ENCODE measurements at regions of chr11 and their contacts with region 1.

Region 1: GRCh38 chr11:66510271-66510989 is at the start of gene BBS1:
- DNase-seq: peak; percentile 84
- H3K4me3 ChIP-seq: peak within 1 kb of the TSS; percentile 56 to 91 (median 89)
- H3K27ac ChIP-seq: peak within 1 kb of the TSS; percentile 34
- H3K4me1 ChIP-seq: peaks cover 5% of the 10 kb centered on the region
- H3K27me3 ChIP-seq: no peaks in the 10 kb centered on the region
- CTCF ChIP-seq: no peak
- POLR2A ChIP-seq: peak; percentile 82
- total RNA-seq, gene BBS1: 29.5 and 32.9 TPM in 2 replicates

Region 2: DNA sequence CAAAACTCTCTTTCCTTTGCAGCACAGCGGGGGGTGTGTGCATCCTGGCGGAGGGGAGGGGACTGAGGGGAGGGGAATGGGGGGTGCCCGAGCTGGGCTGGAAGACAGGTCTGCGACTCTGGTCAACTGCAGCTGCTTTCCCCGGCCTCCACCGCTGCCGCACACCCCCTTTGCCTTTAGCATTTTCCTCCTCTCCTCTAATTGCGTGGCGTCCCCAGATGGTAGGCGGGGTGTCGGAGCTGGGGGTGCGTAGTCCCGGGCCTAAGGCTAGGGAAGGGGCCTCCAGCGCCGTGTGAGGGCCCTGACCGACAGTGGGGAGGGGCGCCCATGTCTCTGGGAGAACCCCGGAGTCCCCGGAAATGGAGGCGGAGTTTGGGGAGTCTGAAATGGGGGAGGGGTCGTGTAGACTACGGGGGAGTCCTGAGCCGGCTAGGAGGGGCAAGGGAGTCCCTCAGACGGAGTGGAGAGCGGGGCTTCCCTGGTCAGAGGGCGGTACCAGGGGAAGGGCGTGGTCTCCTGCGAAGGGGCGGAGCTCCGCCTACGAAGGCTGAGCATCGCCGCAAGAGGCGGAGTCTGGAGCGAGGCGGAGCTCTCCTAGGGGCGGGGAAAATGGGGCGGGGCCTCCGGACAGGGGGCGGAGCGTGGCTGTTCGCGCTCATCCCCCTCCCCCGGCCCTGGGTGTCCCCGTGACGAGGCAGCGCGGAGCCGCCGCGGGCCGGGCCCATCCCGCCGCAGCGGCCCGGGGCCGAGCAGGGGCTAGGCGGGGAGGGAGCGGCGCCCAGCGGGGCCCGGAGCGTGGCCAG is 44.0 kb before region 1 on chr11 and contains the start of gene PELI3:
- CTCF ChIA-PET with region 1: interaction called, 3 read pairs
- POLR2A ChIA-PET with region 1: no interaction called
- dilution Hi-C with region 1: no loop called
- intact Hi-C with region 1: loop called (anchors 1 kb)
- DNase-seq: peak; percentile 90
- H3K4me3 ChIP-seq: peak within 1 kb of the TSS; percentile 63 to 83 (median 65)
- H3K27ac ChIP-seq: no peak within 1 kb of the TSS
- H3K4me1 ChIP-seq: peaks cover 10% of the 10 kb centered on the region
- H3K27me3 ChIP-seq: peaks cover 0 to 2% of the 10 kb centered on the region in 2 experiments
- CTCF ChIP-seq: no peak
- POLR2A ChIP-seq: no peak
- total RNA-seq, gene PELI3: 2.9 and 5.5 TPM in 2 replicates

Region 3: GRCh38 chr11:66545701-66546367 is 35.4 kb after region 1 on chr11 and contains the start of gene ZDHHC24:
- CTCF ChIA-PET with region 1: no interaction called
- POLR2A ChIA-PET with region 1: interaction called, 3 read pairs
- dilution Hi-C with region 1: no loop called
- intact Hi-C with region 1: loop called (anchors 2 kb)
- DNase-seq: peak; percentile 99
- H3K4me3 ChIP-seq: peak within 1 kb of the TSS; percentile 70 to 81 (median 78)
- H3K27ac ChIP-seq: peak within 1 kb of the TSS; percentile 62
- H3K4me1 ChIP-seq: peaks cover 33% of the 10 kb centered on the region
- H3K27me3 ChIP-seq: no peaks in the 10 kb centered on the region
- CTCF ChIP-seq: no peak
- POLR2A ChIP-seq: peak; percentile 90
- total RNA-seq, gene ZDHHC24: 18.3 and 20.1 TPM in 2 replicates